ENCODE measurements at regions of chr6 and their contacts with region 1.

Region 1: DNA sequence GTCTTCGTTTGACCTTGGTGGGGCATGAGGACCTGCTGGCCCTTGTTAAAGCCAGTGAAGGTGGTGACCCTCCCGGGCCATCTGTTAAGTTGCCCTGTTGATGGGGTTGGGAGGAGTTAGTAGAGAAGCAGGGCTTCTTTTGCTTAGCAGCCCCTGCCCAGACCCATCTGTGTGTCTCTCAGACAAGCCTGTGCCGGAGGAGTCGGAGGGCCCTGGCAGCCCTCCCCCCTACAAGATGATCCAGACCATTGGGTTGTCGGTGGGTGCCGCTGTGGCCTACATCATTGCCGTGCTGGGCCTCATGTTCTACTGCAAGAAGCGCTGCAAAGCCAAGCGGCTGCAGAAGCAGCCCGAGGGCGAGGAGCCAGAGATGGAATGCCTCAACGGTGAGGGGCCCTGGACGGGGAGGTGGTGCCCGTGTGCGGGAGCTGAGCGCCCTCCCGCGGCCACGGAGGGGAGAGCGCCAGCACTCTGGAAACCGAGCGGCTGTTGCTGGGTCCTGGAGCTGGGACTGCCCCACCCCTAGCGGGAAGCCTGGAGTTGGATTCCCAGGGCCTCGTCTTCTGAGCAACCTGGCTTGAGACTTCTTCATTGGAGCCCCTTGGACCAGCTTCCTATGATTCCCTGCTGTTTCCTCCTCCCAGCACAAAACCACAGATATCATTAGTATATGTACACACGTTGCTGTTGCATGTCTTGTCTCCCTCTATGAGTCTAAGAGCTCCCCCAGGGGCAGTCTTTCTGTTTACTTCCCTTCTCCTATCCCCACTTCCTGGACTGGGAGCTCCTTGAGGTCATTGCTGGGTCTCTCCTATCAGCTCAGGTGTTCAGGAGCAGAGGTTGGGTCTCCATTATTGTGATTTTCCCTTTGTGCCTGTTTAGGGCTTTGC is 27.6 kb upstream of the SRF start:
- DNase-seq: peak; percentile 90
- H3K4me3 ChIP-seq: no peak overlapping the region
- H3K27ac ChIP-seq: peak overlapping the region in 1 of 2 donors; percentile 41
- H3K4me1 ChIP-seq: peaks cover 9% of the 10 kb centered on the region
- H3K27me3 ChIP-seq: no peaks in the 10 kb centered on the region
- CTCF ChIP-seq: peak; percentile 78 to 88 (median 85)
- POLR2A ChIP-seq: no peak

Region 2: DNA sequence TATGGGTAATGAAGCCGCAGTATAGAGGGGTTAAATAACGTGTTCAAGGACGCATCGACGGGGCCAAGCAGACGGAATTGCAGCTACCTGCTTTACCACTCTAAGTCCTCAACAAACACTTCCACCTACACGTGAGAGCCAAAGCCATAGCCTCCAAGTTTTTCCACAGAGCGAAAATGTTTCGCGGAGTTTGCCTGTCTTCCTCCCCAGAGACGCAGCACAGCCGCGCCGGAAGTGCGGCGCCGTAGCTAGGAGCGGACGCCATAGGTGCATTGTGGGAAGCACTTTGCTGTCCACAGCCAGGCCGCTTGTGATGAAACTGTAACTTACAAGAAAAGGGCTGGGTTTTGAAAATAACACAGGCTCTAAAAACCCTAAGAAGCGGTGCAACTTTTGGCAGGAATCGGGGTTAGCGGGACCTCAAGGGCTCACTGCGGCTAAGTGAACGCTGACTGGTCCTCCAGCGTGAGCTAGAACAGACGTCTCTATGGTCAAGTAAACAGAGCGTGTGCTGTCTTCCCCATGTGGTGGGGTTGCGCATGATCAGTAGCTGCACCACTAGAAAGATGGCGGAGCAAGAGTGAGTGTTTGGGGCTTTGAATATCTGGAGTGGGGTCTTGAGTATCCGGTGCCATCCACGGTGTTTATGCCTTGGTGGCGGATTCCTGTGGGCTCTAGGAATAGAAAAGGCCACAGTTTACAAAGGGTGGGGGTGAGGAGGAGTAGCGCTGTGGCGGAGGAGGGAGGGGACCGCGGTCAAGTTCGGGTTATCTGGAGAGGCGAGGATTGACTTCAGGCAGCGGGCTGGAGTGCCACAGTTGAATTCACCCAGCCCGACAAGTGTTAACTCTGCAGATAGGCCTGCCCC is 263.9 kb before region 1 on chr6 and contains the start of gene RPL7L1:
- intact Hi-C with region 1: no loop called
- DNase-seq: peak; percentile 92
- H3K4me3 ChIP-seq: peak within 1 kb of the TSS; percentile 75 to 83
- H3K27ac ChIP-seq: peak within 1 kb of the TSS; percentile 79 to 98
- H3K4me1 ChIP-seq: peaks cover 16% of the 10 kb centered on the region
- H3K27me3 ChIP-seq: no peaks in the 10 kb centered on the region
- CTCF ChIP-seq: peak in 1 of 3 experiments; percentile 48
- POLR2A ChIP-seq: no peak
- total RNA-seq, gene RPL7L1: 62.6 to 66.8 TPM

Region 3: DNA sequence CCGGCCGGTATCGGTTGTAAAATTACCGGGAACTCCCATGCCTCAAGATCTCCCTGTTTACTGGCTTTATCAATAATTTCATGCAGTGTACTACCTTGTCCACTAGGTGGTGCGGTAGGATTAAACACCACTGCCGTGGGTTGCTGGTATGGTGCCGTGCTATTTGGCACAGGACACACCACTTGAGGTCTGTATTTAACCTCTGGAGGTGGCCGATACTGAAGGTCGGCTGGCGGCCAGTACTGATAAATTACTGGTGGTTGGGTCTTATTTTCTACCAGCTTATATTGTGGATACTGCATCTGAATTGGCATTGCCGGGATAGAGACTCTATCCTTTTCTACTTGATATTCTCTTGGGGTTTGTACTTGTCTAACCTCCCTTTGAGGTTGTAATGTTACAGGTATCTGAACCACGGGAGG is 241.9 kb before region 1 on chr6:
- intact Hi-C with region 1: loop called (anchors 10 kb)
- DNase-seq: peak; percentile 90
- H3K4me3 ChIP-seq: no peak overlapping the region
- H3K27ac ChIP-seq: peak overlapping the region in 1 of 2 donors; percentile 87
- H3K4me1 ChIP-seq: peaks cover 24% of the 10 kb centered on the region
- H3K27me3 ChIP-seq: no peaks in the 10 kb centered on the region
- CTCF ChIP-seq: peak; percentile 92 to 97 (median 95)
- POLR2A ChIP-seq: no peak

Region 4: DNA sequence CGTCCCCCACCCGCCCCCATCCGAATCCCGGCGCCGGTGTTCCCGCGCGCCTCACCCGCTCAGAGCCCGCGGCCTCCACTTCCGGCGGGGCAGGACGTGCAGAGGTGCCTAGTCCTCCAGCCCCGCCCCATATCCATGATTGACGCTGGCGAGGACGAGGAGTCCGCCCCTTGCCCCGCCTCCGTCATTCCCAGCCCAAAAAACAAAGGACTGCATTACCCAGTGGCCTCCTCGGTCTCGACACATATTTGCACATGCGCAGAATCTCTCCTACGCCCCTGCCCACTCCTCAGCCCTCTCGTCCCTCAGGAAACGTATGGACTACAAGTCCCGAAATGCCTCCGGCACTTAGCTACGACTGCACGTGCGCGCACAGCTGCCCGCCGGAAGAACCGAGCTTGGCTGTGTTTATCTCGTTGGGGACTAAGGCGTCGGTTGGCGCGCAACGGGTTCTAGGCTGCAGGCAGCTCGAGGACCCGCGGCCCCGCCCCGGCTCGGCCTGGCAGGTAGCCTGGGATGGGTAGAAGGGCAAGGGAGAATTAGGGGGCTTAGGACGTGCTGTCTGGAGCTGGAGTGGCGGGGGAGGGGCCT is 129.5 kb before region 1 on chr6 and contains the starts of genes KLHDC3 and MEA1:
- intact Hi-C with region 1: loop called (anchors 5 kb)
- DNase-seq: peak; percentile 100
- H3K4me3 ChIP-seq: peak within 1 kb of the TSS; percentile 66 to 93
- H3K27ac ChIP-seq: peak within 1 kb of the TSS; percentile 76
- H3K4me1 ChIP-seq: peaks cover 32% of the 10 kb centered on the region
- H3K27me3 ChIP-seq: no peaks in the 10 kb centered on the region
- CTCF ChIP-seq: no peak
- POLR2A ChIP-seq: peak; percentile 16
- total RNA-seq, gene KLHDC3: 207 to 210 TPM
- total RNA-seq, gene MEA1: 132 to 175 TPM

Measured in testis (tissue), 5 donors.